ENCODE measurements at regions of chr12 and their contacts with region 1.

Region 1: DNA sequence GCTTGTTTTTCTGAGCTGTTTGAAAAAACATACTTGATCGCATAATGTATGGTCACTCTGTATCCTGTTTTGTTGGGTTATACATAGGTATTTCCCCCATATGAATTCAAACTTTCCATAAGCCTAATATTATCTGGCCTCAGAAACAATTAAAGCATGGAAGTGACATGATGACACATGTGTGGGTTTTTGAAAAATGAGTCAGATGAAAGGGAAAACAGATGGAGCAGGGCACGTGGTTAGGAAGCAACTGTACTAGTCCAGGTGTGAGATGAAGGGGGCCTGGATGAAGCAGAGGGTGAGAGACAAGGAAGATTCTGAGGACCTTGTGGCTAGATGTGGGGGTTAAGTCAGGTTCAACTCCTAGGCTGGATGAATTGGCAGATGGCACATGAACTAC is 92.7 kb upstream of the DNM1L start:
- DNase-seq: no peak
- ATAC-seq: no peak
- H3K4me3 ChIP-seq: no peak overlapping the region
- H3K4me3 Mint-ChIP-seq: peak overlapping the region in 2 of 10 donors; percentile 3 to 46
- H3K27ac ChIP-seq: no peak overlapping the region
- H3K27ac Mint-ChIP-seq: peak overlapping the region in 3 of 9 donors; percentile 1 to 63 (median 40)
- H3K4me1 ChIP-seq: peaks cover 0 to 9% of the 10 kb centered on the region in 2 donors
- H3K4me1 Mint-ChIP-seq: peaks cover 22 to 58% (median 33%) of the 10 kb centered on the region in 7 donors
- H3K27me3 ChIP-seq: no peaks in the 10 kb centered on the region
- H3K27me3 Mint-ChIP-seq: no peaks in the 10 kb centered on the region

Region 2: DNA sequence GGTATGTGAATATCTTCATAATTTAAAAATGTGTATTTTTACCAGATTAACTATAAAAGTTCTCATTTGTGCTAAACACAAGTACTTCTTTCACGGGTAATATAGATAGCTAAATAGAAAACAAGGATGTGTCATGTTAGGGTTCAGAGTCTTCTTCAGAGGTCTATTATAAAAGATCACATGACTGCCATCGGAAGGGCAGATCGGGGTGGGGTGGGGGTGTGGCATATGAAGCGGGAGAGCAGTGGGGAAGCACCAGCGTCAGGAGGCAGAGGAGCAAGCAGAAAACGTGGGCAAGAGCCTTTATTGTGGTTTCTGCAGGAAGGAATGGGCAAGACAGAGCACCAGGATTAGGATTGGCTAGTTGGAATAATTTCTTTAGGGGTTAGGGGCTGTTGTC is 29.1 kb after region 1 on chr12:
- CTCF ChIA-PET with region 1: no interaction called
- POLR2A ChIA-PET with region 1: no interaction called
- intact Hi-C with region 1: loop called in 1 of 2 experiments (anchors 5 kb)
- DNase-seq: no peak
- ATAC-seq: no peak
- H3K4me3 ChIP-seq: no peak overlapping the region
- H3K4me3 Mint-ChIP-seq: no peak overlapping the region
- H3K27ac ChIP-seq: no peak overlapping the region
- H3K27ac Mint-ChIP-seq: no peak overlapping the region
- H3K4me1 ChIP-seq: no peaks in the 10 kb centered on the region
- H3K4me1 Mint-ChIP-seq: peaks cover 0 to 5% (median 0%) of the 10 kb centered on the region in 7 donors
- H3K27me3 ChIP-seq: no peaks in the 10 kb centered on the region
- H3K27me3 Mint-ChIP-seq: peaks cover 0 to 30% (median 0%) of the 10 kb centered on the region in 5 donors